Endothelial cell of umbilical vein (primary cell): ENCODE measurements at regions of chr6 and their contacts with region 1.

Region 1: GRCh38 chr6:73803562-73804241 is 107.7 kb downstream of the CD109 start:
- DNase-seq: peak; percentile 72
- H3K4me3 ChIP-seq: no peak overlapping the region
- H3K27ac ChIP-seq: peak overlapping the region; percentile 81
- H3K4me1 ChIP-seq: peaks cover 18% of the 10 kb centered on the region
- H3K27me3 ChIP-seq: no peaks in the 10 kb centered on the region
- CTCF ChIP-seq: peak; percentile 57 to 64
- POLR2A ChIP-seq: no peak

Region 2: GRCh38 chr6:73790574-73790973 is 13.1 kb before region 1 on chr6:
- CTCF ChIA-PET with region 1: interaction called, 16 read pairs
- POLR2A ChIA-PET with region 1: no interaction called
- dilution Hi-C with region 1: no loop called
- intact Hi-C with region 1: no loop called
- DNase-seq: no peak
- H3K4me3 ChIP-seq: no peak overlapping the region
- H3K27ac ChIP-seq: no peak overlapping the region
- H3K4me1 ChIP-seq: peaks cover 18% of the 10 kb centered on the region
- H3K27me3 ChIP-seq: no peaks in the 10 kb centered on the region
- CTCF ChIP-seq: no peak
- POLR2A ChIP-seq: no peak